ENCODE measurements at regions of chr1 and their contacts with region 1.

Region 1: DNA sequence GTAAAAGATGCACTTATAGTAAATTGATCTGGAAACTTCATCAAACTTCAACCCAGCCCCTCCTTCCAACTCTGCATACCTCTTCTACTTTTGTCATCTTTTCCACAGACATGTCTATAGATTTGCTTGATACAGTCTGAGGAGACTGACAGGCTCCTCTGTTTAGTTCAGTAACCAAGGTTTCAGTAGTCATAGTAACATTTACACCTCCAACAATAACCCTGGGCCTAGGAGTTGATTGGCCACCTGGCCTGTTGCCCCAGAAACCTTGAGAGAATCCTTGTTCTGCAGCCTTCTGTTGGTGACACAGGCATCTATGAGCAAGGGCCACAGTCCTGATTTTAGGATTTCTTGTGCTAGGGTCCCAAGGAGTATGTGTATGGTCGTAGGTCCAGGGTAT is at the start of gene CFAP141:
- DNase-seq: no peak
- H3K4me3 ChIP-seq: no peak within 1 kb of the TSS
- H3K27ac ChIP-seq: no peak within 1 kb of the TSS
- H3K4me1 ChIP-seq: no peaks in the 10 kb centered on the region
- H3K27me3 ChIP-seq: no peaks in the 10 kb centered on the region
- CTCF ChIP-seq: no peak
- POLR2A ChIP-seq: no peak
- total RNA-seq, gene CFAP141: not detected

Region 2: GRCh38 chr1:154154534-154155191 is 51.5 kb before region 1 on chr1 and contains the start of gene NUP210L:
- intact Hi-C with region 1: no loop called
- DNase-seq: no peak
- H3K4me3 ChIP-seq: no peak within 1 kb of the TSS
- H3K27ac ChIP-seq: peak within 1 kb of the TSS; percentile 43 to 77
- H3K4me1 ChIP-seq: no peaks in the 10 kb centered on the region
- H3K27me3 ChIP-seq: no peaks in the 10 kb centered on the region
- CTCF ChIP-seq: no peak
- POLR2A ChIP-seq: no peak
- total RNA-seq, gene NUP210L: under 0.01 TPM in 1 of 3 donors, not detected in the others

Region 3: DNA sequence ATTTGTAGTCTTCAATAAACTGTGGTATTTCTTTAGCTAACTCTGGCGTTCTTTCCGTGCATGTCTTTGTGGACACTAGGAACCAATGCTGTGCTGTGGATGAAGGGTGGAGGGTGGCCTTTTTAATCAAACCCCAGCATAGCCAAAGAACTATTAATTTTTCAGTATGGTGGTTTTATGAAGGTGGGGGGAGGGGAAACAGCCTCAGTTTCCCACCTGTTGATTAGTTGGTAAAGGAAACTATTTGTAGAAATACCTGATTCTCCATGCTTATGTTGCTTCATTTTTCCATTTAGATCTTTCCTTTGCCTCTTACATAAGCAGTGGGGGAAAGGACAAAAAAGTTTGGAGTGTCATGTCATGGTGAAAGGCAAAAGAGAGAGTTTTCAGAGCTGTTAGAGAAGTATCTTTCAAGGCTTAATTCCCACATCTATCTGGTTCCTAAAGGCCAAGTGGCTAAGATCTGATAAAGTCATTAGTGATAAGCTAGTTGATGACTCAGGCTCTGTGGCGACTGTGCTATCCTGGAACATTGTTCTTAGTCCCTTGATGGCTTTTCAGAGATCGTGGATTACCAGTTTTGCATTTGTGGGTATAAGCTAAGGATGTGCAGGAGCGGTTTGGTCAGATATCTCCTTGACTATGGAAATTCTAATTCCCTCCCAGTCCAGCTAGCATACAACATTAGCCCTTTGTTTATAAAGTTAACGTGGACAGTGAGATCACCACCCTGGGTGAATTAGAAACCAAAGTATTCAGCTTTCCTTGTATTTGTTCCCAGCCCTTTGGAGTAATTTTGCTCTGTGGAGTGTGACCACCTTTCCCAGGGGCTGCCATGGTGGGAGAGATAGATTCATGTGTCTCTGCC is 57.5 kb after region 1 on chr1:
- intact Hi-C with region 1: loop called (anchors 10 kb)
- DNase-seq: no peak
- H3K4me3 ChIP-seq: no peak overlapping the region
- H3K27ac ChIP-seq: no peak overlapping the region
- H3K4me1 ChIP-seq: no peaks in the 10 kb centered on the region
- H3K27me3 ChIP-seq: no peaks in the 10 kb centered on the region
- CTCF ChIP-seq: no peak
- POLR2A ChIP-seq: no peak